ENCODE measurements at regions of chr1 and their contacts with region 1.

Region 1: GRCh38 chr1:241611063-241611462 is 29.1 kb downstream of the CHML start:
- DNase-seq: peak; percentile 96
- ATAC-seq: peak; percentile 7
- H3K4me3 ChIP-seq: no peak overlapping the region
- H3K27ac ChIP-seq: peak overlapping the region; percentile 85
- H3K4me1 ChIP-seq: peaks cover 94% of the 10 kb centered on the region
- H3K27me3 ChIP-seq: no peaks in the 10 kb centered on the region
- CTCF ChIP-seq: peak; percentile 97

Region 2: DNA sequence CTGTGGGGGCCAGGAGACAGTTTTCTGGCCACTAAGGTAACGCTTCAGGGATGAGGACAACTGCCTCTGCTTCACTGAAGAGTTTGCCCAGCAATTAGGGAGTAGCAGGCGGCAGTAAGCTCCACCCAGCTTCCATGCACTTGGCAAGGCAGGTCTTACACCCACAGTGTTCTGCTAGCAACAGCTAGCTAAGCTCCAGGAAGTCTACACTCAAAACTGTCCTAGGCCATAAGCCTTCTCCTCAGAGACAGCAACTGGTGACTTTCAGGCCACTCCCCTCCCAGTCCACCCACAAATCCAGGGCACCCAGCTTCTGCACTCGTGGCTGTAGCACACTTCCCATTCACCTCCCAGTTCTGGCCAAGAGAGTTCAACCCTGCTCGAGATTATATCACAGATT is 31.6 kb before region 1 on chr1:
- CTCF ChIA-PET with region 1: no interaction called
- POLR2A ChIA-PET with region 1: no interaction called
- intact Hi-C with region 1: no loop called
- DNase-seq: no peak
- ATAC-seq: no peak
- H3K4me3 ChIP-seq: no peak overlapping the region
- H3K27ac ChIP-seq: no peak overlapping the region
- H3K4me1 ChIP-seq: peaks cover 5% of the 10 kb centered on the region; the same call in 1 of the 2 replicates
- H3K27me3 ChIP-seq: no peaks in the 10 kb centered on the region
- CTCF ChIP-seq: no peak

Region 3: GRCh38 chr1:241658081-241658793 is 47.2 kb after region 1 on chr1:
- CTCF ChIA-PET with region 1: no interaction called
- POLR2A ChIA-PET with region 1: no interaction called
- intact Hi-C with region 1: loop called (anchors 1 kb)
- DNase-seq: peak; percentile 76
- ATAC-seq: peak; percentile 68
- H3K4me3 ChIP-seq: no peak overlapping the region
- H3K27ac ChIP-seq: peak overlapping the region; percentile 26
- H3K4me1 ChIP-seq: peaks cover 36% of the 10 kb centered on the region
- H3K27me3 ChIP-seq: no peaks in the 10 kb centered on the region
- CTCF ChIP-seq: no peak

Region 4: GRCh38 chr1:241834733-241835377 is 223.8 kb after region 1 on chr1:
- CTCF ChIA-PET with region 1: no interaction called
- POLR2A ChIA-PET with region 1: no interaction called
- intact Hi-C with region 1: loop called (anchors 1 kb)
- DNase-seq: peak; percentile 76
- ATAC-seq: peak; percentile 52
- H3K4me3 ChIP-seq: no peak overlapping the region
- H3K27ac ChIP-seq: no peak overlapping the region
- H3K4me1 ChIP-seq: peaks cover 28% of the 10 kb centered on the region
- H3K27me3 ChIP-seq: no peaks in the 10 kb centered on the region
- CTCF ChIP-seq: peak; percentile 93

Region 5: DNA sequence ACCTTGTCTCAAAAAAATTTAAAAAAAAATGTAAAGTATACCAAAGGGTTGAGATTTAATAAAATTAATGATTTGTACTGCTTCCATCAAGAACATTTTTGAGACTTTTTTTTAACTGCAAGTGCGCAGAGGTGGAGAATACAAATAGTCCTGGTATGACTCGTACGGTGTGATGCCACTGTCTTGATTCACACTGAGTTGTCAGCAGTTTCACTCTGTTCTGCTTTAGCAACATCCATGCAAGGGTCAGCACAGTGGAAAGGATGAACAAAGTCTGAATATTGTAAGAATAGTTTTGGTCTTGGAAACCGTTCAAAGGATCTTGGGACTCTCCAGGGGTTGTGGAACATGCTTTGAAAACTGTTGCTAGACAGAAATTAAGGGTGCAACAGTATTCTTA is 277.2 kb after region 1 on chr1:
- CTCF ChIA-PET with region 1: no interaction called
- POLR2A ChIA-PET with region 1: no interaction called
- intact Hi-C with region 1: loop called (anchors 2 kb)
- DNase-seq: peak; percentile 35
- ATAC-seq: peak; percentile 82
- H3K4me3 ChIP-seq: no peak overlapping the region
- H3K27ac ChIP-seq: no peak overlapping the region
- H3K4me1 ChIP-seq: no peaks in the 10 kb centered on the region
- H3K27me3 ChIP-seq: no peaks in the 10 kb centered on the region
- CTCF ChIP-seq: no peak

Region 6: GRCh38 chr1:241972703-241973369 is 361.8 kb after region 1 on chr1:
- CTCF ChIA-PET with region 1: no interaction called
- POLR2A ChIA-PET with region 1: no interaction called
- intact Hi-C with region 1: no loop called
- DNase-seq: no peak
- ATAC-seq: peak; percentile 20; the same call in 1 of the 2 replicates
- H3K4me3 ChIP-seq: no peak overlapping the region
- H3K27ac ChIP-seq: no peak overlapping the region
- H3K4me1 ChIP-seq: no peaks in the 10 kb centered on the region
- H3K27me3 ChIP-seq: no peaks in the 10 kb centered on the region
- CTCF ChIP-seq: no peak

Region 7: DNA sequence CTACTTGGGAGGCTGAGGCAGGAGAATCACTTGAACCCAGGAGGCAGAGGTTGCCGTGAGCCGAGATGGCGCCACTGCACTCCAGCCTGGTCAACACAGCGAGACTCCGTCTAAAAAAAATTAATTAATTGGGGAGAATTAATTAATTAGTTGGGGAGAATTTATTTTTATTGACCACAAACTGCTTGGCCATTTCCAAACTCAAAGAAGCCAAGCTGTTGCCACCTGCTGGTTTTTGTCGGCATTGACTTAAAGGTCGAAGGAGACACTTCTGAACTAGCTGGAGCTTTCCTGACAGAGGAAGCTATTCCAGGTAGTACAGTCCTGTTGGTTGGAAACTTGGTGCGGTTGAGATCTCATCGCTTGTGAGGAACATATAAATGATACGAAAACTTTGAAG is 374.7 kb after region 1 on chr1:
- CTCF ChIA-PET with region 1: no interaction called
- POLR2A ChIA-PET with region 1: no interaction called
- intact Hi-C with region 1: loop called (anchors 5 kb)
- DNase-seq: peak; percentile 79
- ATAC-seq: peak; percentile 62
- H3K4me3 ChIP-seq: no peak overlapping the region
- H3K27ac ChIP-seq: no peak overlapping the region
- H3K4me1 ChIP-seq: peaks cover 27% of the 10 kb centered on the region
- H3K27me3 ChIP-seq: no peaks in the 10 kb centered on the region
- CTCF ChIP-seq: peak; percentile 78

Measured in PC-3 (cell line).